ENCODE measurements at regions of chr3 and their contacts with region 1.

Region 1: GRCh38 chr3:101936419-101937356 is 87.4 kb downstream of the NFKBIZ start:
- DNase-seq: peak; percentile 79
- H3K4me3 Mint-ChIP-seq: peak overlapping the region; percentile 55
- H3K27ac Mint-ChIP-seq: peak overlapping the region; percentile 73
- H3K4me1 Mint-ChIP-seq: peaks cover 27% of the 10 kb centered on the region
- H3K27me3 Mint-ChIP-seq: peaks cover 15% of the 10 kb centered on the region

Region 2: GRCh38 chr3:101615525-101615924 is 321.2 kb before region 1 on chr3:
- intact Hi-C with region 1: no loop called
- DNase-seq: no peak
- H3K4me3 Mint-ChIP-seq: no peak overlapping the region
- H3K27ac Mint-ChIP-seq: no peak overlapping the region
- H3K4me1 Mint-ChIP-seq: no peaks in the 10 kb centered on the region
- H3K27me3 Mint-ChIP-seq: no peaks in the 10 kb centered on the region

Region 3: GRCh38 chr3:101946906-101947305 is 10.2 kb after region 1 on chr3:
- intact Hi-C with region 1: loop called (anchors 1 kb)
- DNase-seq: no peak
- H3K4me3 Mint-ChIP-seq: no peak overlapping the region
- H3K27ac Mint-ChIP-seq: no peak overlapping the region
- H3K4me1 Mint-ChIP-seq: peaks cover 30% of the 10 kb centered on the region
- H3K27me3 Mint-ChIP-seq: peaks cover 21% of the 10 kb centered on the region

Region 4: GRCh38 chr3:102189956-102190723 is 253.5 kb after region 1 on chr3:
- intact Hi-C with region 1: no loop called
- DNase-seq: no peak
- H3K4me3 Mint-ChIP-seq: no peak overlapping the region
- H3K27ac Mint-ChIP-seq: no peak overlapping the region
- H3K4me1 Mint-ChIP-seq: peaks cover 12% of the 10 kb centered on the region
- H3K27me3 Mint-ChIP-seq: no peaks in the 10 kb centered on the region